Activated naive CD4-positive, alpha-beta T cell treated with anti-CD3 and anti-CD28 coated beads for 36 hours (primary cell): ENCODE measurements at regions of chr9 and their contacts with region 1.

Region 1: DNA sequence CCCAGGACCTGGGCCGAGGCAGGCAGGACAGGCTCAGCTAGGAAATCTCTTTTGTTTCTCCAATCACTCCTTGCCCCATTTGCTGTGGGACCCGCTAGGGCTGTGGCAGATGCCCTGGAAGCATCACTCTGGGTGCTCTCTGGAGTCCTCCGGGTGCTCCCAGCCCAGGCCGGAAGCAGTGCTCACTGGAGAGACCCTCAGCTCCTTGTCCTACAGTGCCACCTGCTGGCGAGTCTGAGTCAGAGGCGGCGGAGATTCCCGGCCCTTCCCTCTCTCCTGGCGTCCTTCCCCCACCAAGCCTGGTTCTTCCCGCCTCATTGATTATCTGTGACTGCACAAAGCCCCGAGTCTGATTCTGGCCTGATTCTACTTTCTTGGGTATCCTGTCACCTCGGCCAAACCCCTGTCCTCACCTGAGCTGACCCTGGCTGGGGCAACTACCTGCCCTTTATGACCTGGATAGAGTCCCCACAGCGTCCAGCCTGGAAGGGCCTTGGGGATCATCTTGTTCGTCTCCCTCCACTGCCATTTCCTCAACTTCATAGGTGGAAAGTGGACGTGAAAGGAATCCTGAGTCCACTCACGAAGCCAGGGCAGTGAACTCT is 7.3 kb upstream of the BARHL1 start:
- DNase-seq: peak; percentile 76
- H3K4me3 Mint-ChIP-seq: no peak overlapping the region
- H3K27ac Mint-ChIP-seq: no peak overlapping the region
- H3K4me1 Mint-ChIP-seq: no peaks in the 10 kb centered on the region
- H3K27me3 Mint-ChIP-seq: peaks cover 50% of the 10 kb centered on the region

Region 2: DNA sequence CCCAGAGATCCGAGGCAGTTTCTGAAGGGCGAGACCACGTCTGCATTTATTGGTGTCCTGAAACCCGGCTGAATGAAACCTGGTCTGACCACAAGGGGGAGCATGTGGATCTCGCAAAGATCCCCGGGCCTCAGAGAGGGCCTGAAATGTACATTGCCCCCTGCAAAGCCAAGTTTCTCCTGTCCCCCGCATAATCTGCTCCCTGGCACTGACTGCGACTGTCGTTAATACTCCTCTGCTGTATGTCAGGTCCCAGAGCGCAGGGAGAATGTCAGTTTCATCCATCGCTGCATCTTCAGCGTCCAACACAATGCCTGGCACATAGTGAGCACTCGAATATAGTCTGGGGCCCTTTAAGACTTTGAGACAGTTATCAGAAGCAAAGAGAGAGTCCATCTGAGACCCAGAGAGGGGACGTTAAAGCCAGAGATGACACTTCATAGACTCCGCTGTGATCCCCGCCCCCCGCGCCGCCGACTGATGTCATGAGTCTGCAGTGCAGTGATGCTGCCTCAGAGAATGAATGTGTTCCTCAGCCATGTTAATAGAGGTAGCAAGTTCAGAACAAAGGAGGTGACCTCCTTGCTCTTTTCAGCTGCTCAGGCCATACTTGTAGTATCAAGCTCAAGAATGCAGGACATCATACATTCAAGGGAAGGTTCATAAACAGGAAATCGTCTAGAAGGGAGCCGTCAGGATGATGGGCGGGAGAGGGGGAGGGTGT is 67.2 kb before region 1 on chr9:
- CTCF ChIA-PET with region 1: interaction called, 10 read pairs
- intact Hi-C with region 1: loop called (anchors 1 kb)
- DNase-seq: peak; percentile 81
- H3K4me3 Mint-ChIP-seq: no peak overlapping the region
- H3K27ac Mint-ChIP-seq: no peak overlapping the region
- H3K4me1 Mint-ChIP-seq: peaks cover 2% of the 10 kb centered on the region
- H3K27me3 Mint-ChIP-seq: peaks cover 7% of the 10 kb centered on the region